ENCODE measurements at regions of chr15 and their contacts with region 1.

Region 1: GRCh38 chr15:85750319-85750806 is 44.4 kb downstream of the KLHL25 start:
- DNase-seq: no peak
- H3K4me3 ChIP-seq: peak overlapping the region in 2 of 4 donors; percentile 18 to 39
- H3K27ac ChIP-seq: peak overlapping the region; percentile 42 to 85 (median 78)
- H3K4me1 ChIP-seq: peaks cover 14 to 73% (median 30%) of the 10 kb centered on the region in 3 donors
- H3K27me3 ChIP-seq: no peaks in the 10 kb centered on the region
- CTCF ChIP-seq: no peak
- POLR2A ChIP-seq: no peak

Region 2: GRCh38 chr15:85831415-85832113 is 81.2 kb after region 1 on chr15:
- intact Hi-C with region 1: loop called (anchors 10 kb)
- DNase-seq: no peak
- H3K4me3 ChIP-seq: no peak overlapping the region
- H3K27ac ChIP-seq: no peak overlapping the region
- H3K4me1 ChIP-seq: peaks cover 0 to 8% (median 0%) of the 10 kb centered on the region in 3 donors
- H3K27me3 ChIP-seq: no peaks in the 10 kb centered on the region
- CTCF ChIP-seq: peak in 5 of 6 experiments; percentile 31 to 60 (median 38)
- POLR2A ChIP-seq: no peak

Region 3: DNA sequence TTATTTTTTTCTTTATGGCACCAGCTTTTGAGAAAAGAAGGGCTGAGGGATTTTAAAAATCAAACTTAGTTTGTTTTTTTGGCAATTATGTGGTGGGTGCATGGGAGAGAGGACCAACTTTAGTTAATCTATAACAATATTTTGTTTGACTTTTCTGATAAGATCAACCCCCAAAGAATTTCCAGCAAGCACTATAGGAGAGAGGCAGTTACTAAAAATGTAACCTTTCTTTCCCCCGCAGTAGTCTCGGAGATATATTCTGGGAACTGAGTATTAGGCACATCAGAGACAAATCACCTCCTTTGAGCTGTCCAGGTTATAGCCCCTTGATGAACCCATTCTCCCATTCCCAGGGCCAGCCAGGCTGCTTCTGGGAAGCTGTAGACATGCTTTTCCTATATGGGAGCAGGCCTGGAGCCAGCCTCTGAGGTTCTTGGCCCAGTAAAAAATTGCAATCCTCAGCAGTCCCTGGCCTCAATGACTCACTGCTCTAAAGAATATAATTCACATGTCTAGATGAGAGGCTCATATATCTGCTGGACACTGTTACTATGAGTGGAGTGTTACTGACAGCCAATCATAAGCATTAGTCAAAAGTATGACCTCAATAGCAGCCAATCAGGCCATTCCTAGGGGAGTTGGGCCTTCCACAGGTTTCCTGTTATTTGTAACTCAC is 191.0 kb after region 1 on chr15:
- intact Hi-C with region 1: no loop called
- DNase-seq: no peak
- H3K4me3 ChIP-seq: no peak overlapping the region
- H3K27ac ChIP-seq: no peak overlapping the region
- H3K4me1 ChIP-seq: no peaks in the 10 kb centered on the region
- H3K27me3 ChIP-seq: no peaks in the 10 kb centered on the region
- CTCF ChIP-seq: no peak
- POLR2A ChIP-seq: no peak

Measured in esophagus squamous epithelium (tissue), 5 donors.